Activated T-helper 1 cell treated with anti-CD3 and anti-CD28 coated beads, Interleukin-12 subunit alpha, Interleukin-12 subunit beta, Interleukin-2, Interleukin-4 antibody, amounts not matched to agents 30 ng/mL and 10 ng/mL and 1 ng/mL, durations not matched to agents 14 hours and 24 hours and 36 hours (primary cell): ENCODE measurements at regions of chr10 and their contacts with region 1.

Region 1: DNA sequence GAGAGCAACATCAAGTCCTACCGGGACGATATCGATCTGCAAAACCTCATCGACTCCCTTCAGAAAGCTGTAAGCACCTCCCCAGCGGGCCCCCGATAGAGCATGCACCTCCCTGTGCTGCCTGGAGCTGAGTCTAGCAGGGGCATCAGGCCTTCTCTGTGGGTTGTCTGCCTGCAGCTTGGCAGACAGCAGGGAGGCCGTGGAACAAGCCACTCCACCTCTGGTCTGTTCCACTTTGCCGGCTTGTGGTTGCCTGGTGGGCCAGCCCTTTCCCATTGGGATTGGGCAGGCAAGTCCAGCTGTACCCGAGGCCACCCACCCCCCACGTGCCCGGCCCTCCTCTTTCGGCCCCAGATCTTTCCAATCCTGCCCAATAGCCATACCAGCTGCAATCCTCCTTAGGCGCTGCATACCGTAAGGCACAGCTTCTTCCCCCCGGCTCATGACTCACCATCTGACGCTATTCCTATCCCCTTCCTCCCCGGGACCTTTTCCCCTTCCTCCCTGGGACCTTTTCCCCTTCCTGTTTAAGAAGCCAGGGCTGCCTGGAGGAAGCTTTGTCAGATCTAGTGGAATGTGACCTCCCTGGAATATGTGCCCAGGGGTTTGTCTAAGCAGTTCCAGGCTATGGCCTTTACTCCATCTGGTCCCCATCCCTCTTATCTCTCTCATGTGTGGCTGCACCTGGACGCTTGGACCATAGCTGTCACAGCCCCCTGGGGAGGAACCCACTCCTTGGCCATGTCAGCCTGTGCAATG is 28.1 kb upstream of the SH2D4B start:
- DNase-seq: no peak
- H3K4me3 Mint-ChIP-seq: no peak overlapping the region
- H3K27ac Mint-ChIP-seq: no peak overlapping the region
- H3K4me1 Mint-ChIP-seq: peaks cover 46% of the 10 kb centered on the region
- H3K27me3 Mint-ChIP-seq: no peaks in the 10 kb centered on the region

Region 2: DNA sequence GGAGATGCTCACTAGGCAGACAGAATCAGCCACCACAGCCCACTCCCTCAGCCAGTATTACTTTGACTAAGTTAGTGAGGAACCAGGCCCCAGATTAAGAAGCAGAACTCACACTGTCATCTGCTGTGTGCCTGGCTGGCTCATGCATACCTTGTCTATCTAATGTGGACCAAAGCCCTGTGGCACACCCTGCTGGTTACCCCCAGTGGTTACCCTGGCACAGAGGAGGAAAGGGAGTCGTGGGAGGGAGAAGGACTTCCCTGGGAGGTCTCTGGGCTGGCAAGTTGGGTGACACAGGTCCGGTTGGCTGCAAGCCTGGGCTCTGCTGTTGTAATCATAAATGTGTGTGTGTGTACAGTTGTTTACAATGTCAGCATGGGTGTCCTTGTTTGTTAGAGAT is 20.7 kb after region 1 on chr10:
- intact Hi-C with region 1: loop called (anchors 1 kb)
- DNase-seq: peak; percentile 29
- H3K4me3 Mint-ChIP-seq: peak overlapping the region; percentile 72
- H3K27ac Mint-ChIP-seq: peak overlapping the region; percentile 92
- H3K4me1 Mint-ChIP-seq: peaks cover 73% of the 10 kb centered on the region
- H3K27me3 Mint-ChIP-seq: no peaks in the 10 kb centered on the region

Region 3: GRCh38 chr10:80535671-80536365 is 26.2 kb after region 1 on chr10:
- intact Hi-C with region 1: loop called (anchors 1 kb)
- DNase-seq: peak; percentile 71
- H3K4me3 Mint-ChIP-seq: peak overlapping the region; percentile 95
- H3K27ac Mint-ChIP-seq: peak overlapping the region; percentile 100
- H3K4me1 Mint-ChIP-seq: peaks cover 49% of the 10 kb centered on the region
- H3K27me3 Mint-ChIP-seq: no peaks in the 10 kb centered on the region